ENCODE measurements at regions of chr5 and their contacts with region 1.

Region 1: DNA sequence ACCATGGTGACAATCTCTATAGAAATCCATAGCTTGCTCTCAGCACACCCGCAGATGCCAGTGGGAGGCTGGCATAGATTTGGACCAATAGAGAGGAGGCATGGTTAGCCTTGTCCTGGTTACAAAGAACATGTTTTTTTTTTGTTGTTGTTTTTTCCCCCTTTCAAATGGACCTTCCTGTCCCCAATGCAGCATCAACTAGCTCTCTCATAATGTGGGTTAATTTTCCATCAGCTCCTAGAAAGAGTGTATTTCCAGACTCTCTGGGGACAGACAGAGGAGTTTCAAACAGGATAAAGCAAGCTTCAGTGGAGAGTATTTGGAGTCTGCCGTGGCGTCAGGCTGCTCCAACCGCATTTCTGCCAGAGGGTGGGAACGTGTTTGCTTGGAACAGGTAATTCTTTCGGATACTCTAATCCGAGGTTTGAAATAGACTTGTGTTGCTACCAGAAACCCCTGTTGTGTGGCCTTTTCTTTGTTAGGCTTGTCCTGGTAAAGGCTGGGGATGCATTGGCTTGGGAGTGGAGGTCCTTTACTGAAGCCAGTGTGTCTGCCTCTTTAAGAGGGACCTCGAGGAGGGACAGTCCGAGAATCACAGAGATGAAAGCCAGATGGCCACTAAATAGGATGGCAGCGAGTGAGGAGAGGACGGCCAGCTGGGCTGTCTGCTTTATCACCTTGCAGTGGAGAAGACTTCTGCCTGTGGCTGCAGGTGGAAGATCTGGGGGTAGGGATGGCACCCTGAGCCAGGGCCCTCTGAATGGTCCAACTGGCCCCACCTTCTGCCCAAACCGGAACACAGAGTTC is 130.5 kb upstream of the CPEB4 start:
- DNase-seq: no peak
- H3K4me3 ChIP-seq: no peak overlapping the region
- H3K27ac ChIP-seq: no peak overlapping the region
- H3K4me1 ChIP-seq: no peaks in the 10 kb centered on the region
- H3K27me3 ChIP-seq: no peaks in the 10 kb centered on the region
- CTCF ChIP-seq: no peak

Region 2: DNA sequence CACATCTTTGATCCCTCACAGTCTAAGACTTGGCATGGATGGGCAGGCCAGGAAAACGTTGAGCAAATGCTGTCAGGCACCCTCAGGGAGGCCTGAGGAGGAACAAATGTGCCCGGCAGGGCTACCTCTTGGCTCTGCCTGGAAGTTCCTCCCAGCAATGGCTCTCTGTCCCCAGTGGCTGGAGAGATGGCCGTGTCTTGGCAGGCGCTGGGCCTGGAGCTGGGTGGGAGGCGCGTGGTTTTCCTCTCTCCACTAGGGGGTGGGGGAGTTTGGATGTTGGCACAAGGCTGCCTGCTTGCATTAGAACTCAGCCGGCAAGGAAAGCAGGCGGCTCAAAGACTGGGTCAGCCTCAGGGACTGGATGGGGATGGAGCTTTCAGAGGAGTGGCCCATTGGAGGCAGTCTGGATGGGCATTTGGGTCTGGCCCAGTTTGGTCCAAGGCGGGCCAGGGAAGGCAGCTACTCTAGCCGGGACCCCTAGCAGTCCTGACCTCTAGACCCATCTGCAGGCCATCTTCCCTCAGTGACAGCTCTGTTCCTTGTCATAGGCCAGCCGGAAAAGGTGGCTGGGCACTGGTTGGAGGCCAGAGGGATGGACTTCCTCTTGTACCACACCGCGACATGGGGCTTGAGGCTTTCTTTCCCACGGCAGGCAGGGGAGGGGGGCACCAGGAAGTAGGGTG is 361.2 kb before region 1 on chr5:
- CTCF ChIA-PET with region 1: no interaction called
- dilution Hi-C with region 1: no loop called
- in situ Hi-C with region 1: no loop called
- intact Hi-C with region 1: no loop called
- DNase-seq: no peak
- H3K4me3 ChIP-seq: no peak overlapping the region
- H3K27ac ChIP-seq: no peak overlapping the region
- H3K4me1 ChIP-seq: no peaks in the 10 kb centered on the region
- H3K27me3 ChIP-seq: peaks cover 2% of the 10 kb centered on the region
- CTCF ChIP-seq: peak in 1 of 2 donors; percentile 29

Region 3: DNA sequence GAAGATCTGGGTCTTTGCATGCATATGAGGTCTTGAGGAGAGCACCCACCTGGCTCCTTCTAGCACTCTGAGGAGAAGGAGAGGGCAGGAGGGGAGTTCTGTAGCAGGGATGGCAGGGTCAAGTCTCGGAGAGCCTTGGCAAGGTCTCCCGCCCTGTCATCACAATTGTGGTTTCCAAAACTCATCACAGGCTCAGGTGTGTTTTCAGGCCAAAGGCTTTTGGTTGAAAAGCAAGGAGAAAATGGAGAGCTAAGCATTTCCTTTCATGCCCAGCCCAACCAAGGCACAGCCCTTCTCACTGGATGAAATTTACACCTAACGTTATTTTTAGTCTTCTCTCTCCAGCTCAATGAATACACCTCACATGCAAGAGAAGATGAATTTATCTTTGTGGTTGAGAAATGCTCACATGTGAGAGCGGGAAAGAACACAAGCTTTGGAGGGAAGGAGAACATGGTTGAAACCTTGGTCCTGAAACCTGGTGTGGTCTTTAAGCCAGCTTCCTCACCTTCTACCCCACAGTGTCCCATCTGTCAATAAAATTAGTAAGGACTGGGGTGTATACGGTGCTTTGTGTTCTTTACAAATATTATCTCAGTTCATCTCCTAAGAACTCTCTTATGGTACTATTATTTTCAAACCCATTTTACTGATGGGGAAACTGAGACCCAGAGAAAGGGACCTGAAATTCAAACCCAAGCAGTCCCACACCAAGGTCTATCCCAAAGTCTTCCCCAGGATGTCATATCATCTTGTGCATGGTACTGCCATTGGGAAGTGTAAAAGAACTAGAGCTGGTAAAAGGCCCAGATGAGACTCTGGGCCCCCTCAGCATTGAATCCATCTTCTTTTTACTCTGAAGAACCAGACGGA is 82.7 kb after region 1 on chr5:
- CTCF ChIA-PET with region 1: no interaction called
- dilution Hi-C with region 1: loop called (anchors 5 kb)
- in situ Hi-C with region 1: no loop called
- intact Hi-C with region 1: no loop called
- DNase-seq: no peak
- H3K4me3 ChIP-seq: no peak overlapping the region
- H3K27ac ChIP-seq: no peak overlapping the region
- H3K4me1 ChIP-seq: peaks cover 4% of the 10 kb centered on the region
- H3K27me3 ChIP-seq: no peaks in the 10 kb centered on the region
- CTCF ChIP-seq: no peak

Measured in mammary epithelial cell (primary cell).